A673 (cell line): ENCODE measurements at regions of chrX and their contacts with region 1.

Region 1: GRCh38 chrX:153032397-153033118 is 23.7 kb upstream of the PNMA3 start:
- DNase-seq: peak; percentile 60
- H3K4me3 ChIP-seq: peak overlapping the region; percentile 31
- H3K27ac ChIP-seq: no peak overlapping the region
- H3K4me1 ChIP-seq: no peaks in the 10 kb centered on the region
- H3K27me3 ChIP-seq: no peaks in the 10 kb centered on the region
- CTCF ChIP-seq: peak; percentile 79

Region 2: GRCh38 chrX:153438531-153438930 is 406.0 kb after region 1 on chrX:
- CTCF ChIA-PET with region 1: no interaction called
- POLR2A ChIA-PET with region 1: no interaction called
- intact Hi-C with region 1: loop called (anchors 10 kb)
- DNase-seq: peak; percentile 22
- H3K4me3 ChIP-seq: no peak overlapping the region
- H3K27ac ChIP-seq: no peak overlapping the region
- H3K4me1 ChIP-seq: no peaks in the 10 kb centered on the region
- H3K27me3 ChIP-seq: no peaks in the 10 kb centered on the region
- CTCF ChIP-seq: peak; percentile 52; the same call in 1 of the 2 replicates

Region 3: GRCh38 chrX:153530411-153531129 is 498.0 kb after region 1 on chrX:
- CTCF ChIA-PET with region 1: no interaction called
- POLR2A ChIA-PET with region 1: no interaction called
- intact Hi-C with region 1: no loop called
- DNase-seq: no peak
- H3K4me3 ChIP-seq: no peak overlapping the region
- H3K27ac ChIP-seq: no peak overlapping the region
- H3K4me1 ChIP-seq: no peaks in the 10 kb centered on the region
- H3K27me3 ChIP-seq: no peaks in the 10 kb centered on the region
- CTCF ChIP-seq: no peak